A549 (cell line): ENCODE measurements at regions of chr6 and their contacts with region 1.

Region 1: GRCh38 chr6:3732345-3733141 is 19.0 kb downstream of the PXDC1 start:
- DNase-seq: peak; percentile 44 to 62
- ATAC-seq: peak; percentile 89 to 96
- H3K4me3 ChIP-seq: no peak overlapping the region
- H3K27ac ChIP-seq: peak overlapping the region in 1 of 2 experiments; percentile 41; a peak in 2 of 6 replicates
- H3K4me1 ChIP-seq: no peaks in the 10 kb centered on the region
- CTCF ChIP-seq: peak; percentile 84
- EP300 ChIP-seq: no peak
- POLR2A ChIP-seq: no peak
- RAD21 ChIP-seq: peak; percentile 96

Region 2: DNA sequence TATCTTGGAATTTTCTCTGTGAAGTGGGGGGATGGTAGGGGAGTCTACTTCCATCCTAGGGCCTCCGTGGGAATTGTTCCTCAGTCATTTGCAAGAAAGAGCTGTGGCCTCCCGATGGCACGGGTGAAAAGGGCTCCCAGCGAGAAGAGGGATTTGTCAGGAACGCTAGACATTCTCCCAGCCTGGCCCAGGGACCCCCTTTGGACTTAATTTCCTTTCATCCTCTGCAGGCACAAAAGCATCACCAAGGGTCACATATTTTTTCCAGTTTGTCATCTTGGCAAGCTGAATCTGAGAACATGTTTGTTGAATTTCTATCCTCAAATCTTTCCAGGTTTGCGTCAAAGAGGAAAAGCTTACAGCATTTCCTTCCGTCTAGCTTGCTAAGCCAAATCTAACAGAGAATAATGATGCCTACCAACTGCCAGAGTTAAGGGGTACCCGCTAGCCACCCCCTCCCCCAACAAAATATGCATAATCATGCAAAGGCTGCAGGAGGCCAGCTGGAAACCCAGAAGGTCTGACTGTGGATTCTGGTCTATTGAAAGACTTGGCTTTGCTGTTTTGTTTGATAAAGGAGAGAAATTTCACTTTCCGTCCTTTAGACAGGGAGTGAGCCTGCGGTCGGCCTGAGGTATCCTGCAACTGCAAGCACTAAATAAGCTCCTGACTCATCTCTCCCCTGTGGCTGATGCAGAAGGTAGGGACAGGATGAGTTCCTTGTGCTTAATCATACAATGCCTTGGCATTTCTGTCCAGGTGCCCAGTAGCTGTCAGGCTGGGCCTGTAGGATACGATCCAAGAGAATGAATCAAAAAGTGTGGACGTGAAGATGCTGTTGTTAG is 450.7 kb before region 1 on chr6:
- CTCF ChIA-PET with region 1: interaction called, 186 read pairs
- POLR2A ChIA-PET with region 1: interaction called, 3 read pairs
- DNase-seq: peak; percentile 21 to 47
- ATAC-seq: peak; percentile 48 to 66; a peak in 5 of 6 replicates
- H3K4me3 ChIP-seq: no peak overlapping the region
- H3K27ac ChIP-seq: peak overlapping the region in 1 of 2 experiments; percentile 53; a peak in 3 of 6 replicates
- H3K4me1 ChIP-seq: peaks cover 18% of the 10 kb centered on the region
- CTCF ChIP-seq: no peak
- EP300 ChIP-seq: no peak
- POLR2A ChIP-seq: no peak
- RAD21 ChIP-seq: peak in 1 of 2 experiments; percentile 19; a peak in 2 of 5 replicates

Region 3: GRCh38 chr6:3287308-3287707 is 445.2 kb before region 1 on chr6:
- CTCF ChIA-PET with region 1: interaction called, 186 read pairs
- POLR2A ChIA-PET with region 1: interaction called, 3 read pairs
- DNase-seq: no peak
- ATAC-seq: no peak
- H3K4me3 ChIP-seq: no peak overlapping the region
- H3K27ac ChIP-seq: no peak overlapping the region
- H3K4me1 ChIP-seq: peaks cover 4% of the 10 kb centered on the region; the same call in 2 of the 3 replicates
- CTCF ChIP-seq: no peak
- EP300 ChIP-seq: no peak
- POLR2A ChIP-seq: no peak
- RAD21 ChIP-seq: no peak

Region 4: DNA sequence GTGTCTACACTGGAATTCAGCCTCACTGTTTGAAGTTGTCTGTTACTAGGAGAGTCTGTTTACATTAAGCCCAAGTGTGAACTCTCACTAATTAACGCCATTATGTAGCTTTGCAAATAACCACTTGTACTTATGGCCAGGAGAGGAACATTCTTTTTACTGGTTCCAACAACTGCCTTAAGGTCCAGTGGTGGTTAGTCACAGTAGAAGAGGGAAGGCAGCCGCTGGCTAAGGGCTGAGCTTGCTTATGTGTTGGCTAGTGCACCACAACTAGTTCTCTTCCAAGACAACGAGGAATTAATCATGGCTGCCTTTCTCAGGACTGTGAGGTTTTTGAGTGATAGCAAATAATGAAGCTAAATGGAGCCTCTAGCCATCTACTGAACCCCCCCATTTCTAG is 260.8 kb before region 1 on chr6:
- CTCF ChIA-PET with region 1: interaction called, 11 read pairs
- POLR2A ChIA-PET with region 1: no interaction called
- DNase-seq: no peak
- ATAC-seq: no peak
- H3K4me3 ChIP-seq: no peak overlapping the region
- H3K27ac ChIP-seq: peak overlapping the region; percentile 70 to 86; a peak in 4 of 6 replicates
- H3K4me1 ChIP-seq: peaks cover 18% of the 10 kb centered on the region
- CTCF ChIP-seq: no peak
- EP300 ChIP-seq: no peak
- POLR2A ChIP-seq: no peak
- RAD21 ChIP-seq: no peak

Region 5: GRCh38 chr6:3509336-3509735 is 223.2 kb before region 1 on chr6:
- CTCF ChIA-PET with region 1: interaction called, 11 read pairs
- POLR2A ChIA-PET with region 1: no interaction called
- DNase-seq: no peak
- ATAC-seq: no peak
- H3K4me3 ChIP-seq: no peak overlapping the region
- H3K27ac ChIP-seq: no peak overlapping the region
- H3K4me1 ChIP-seq: peaks cover 9% of the 10 kb centered on the region; the same call in 2 of the 3 replicates
- CTCF ChIP-seq: no peak
- EP300 ChIP-seq: no peak
- POLR2A ChIP-seq: no peak
- RAD21 ChIP-seq: no peak

Region 6: GRCh38 chr6:3518356-3519225 is 214.0 kb before region 1 on chr6:
- CTCF ChIA-PET with region 1: interaction called, 12 read pairs
- POLR2A ChIA-PET with region 1: no interaction called
- DNase-seq: peak; percentile 39 to 55
- ATAC-seq: peak; percentile 86 to 87
- H3K4me3 ChIP-seq: no peak overlapping the region
- H3K27ac ChIP-seq: peak overlapping the region; percentile 81 to 88
- H3K4me1 ChIP-seq: peaks cover 44% of the 10 kb centered on the region
- CTCF ChIP-seq: no peak
- EP300 ChIP-seq: no peak
- POLR2A ChIP-seq: no peak
- RAD21 ChIP-seq: no peak

Region 7: GRCh38 chr6:3721810-3722626 is 10.5 kb before region 1 on chr6:
- CTCF ChIA-PET with region 1: interaction called, 28 read pairs
- POLR2A ChIA-PET with region 1: no interaction called
- DNase-seq: no peak
- ATAC-seq: no peak
- H3K4me3 ChIP-seq: no peak overlapping the region
- H3K27ac ChIP-seq: no peak overlapping the region
- H3K4me1 ChIP-seq: no peaks in the 10 kb centered on the region
- CTCF ChIP-seq: no peak
- EP300 ChIP-seq: no peak
- POLR2A ChIP-seq: no peak
- RAD21 ChIP-seq: no peak

Region 8: GRCh38 chr6:3835055-3835731 is 102.7 kb after region 1 on chr6:
- CTCF ChIA-PET with region 1: no interaction called
- POLR2A ChIA-PET with region 1: no interaction called
- DNase-seq: peak in 1 of 2 experiments; percentile 46
- ATAC-seq: peak; percentile 59 to 69; a peak in 4 of 6 replicates
- H3K4me3 ChIP-seq: no peak overlapping the region
- H3K27ac ChIP-seq: peak overlapping the region; percentile 44 to 71; a peak in 5 of 6 replicates
- H3K4me1 ChIP-seq: peaks cover 12% of the 10 kb centered on the region; the same call in 2 of the 3 replicates
- CTCF ChIP-seq: peak; percentile 26; the same call in 1 of the 3 replicates
- EP300 ChIP-seq: no peak
- POLR2A ChIP-seq: no peak
- RAD21 ChIP-seq: peak; percentile 39 to 52; a peak in 3 of 5 replicates